H1 (cell line): ENCODE measurements at regions of chr22 and their contacts with region 1.

Region 1: GRCh38 chr22:36552289-36552688 is 23.3 kb upstream of the EIF3D start:
- DNase-seq: no peak
- H3K4me3 ChIP-seq: no peak overlapping the region
- H3K27ac ChIP-seq: no peak overlapping the region
- H3K4me1 ChIP-seq: peaks cover 0 to 9% (median 3%) of the 10 kb centered on the region in 4 experiments; a peak in 3 of 7 replicates
- H3K27me3 ChIP-seq: no peaks in the 10 kb centered on the region
- CTCF ChIP-seq: no peak
- EP300 ChIP-seq: no peak
- POLR2A ChIP-seq: no peak
- RAD21 ChIP-seq: no peak

Region 2: GRCh38 chr22:36492109-36492508 is 60.2 kb before region 1 on chr22:
- CTCF ChIA-PET with region 1: no interaction called
- POLR2A ChIA-PET with region 1: no interaction called
- DNase-seq: no peak
- H3K4me3 ChIP-seq: no peak overlapping the region
- H3K27ac ChIP-seq: no peak overlapping the region
- H3K4me1 ChIP-seq: no peaks in the 10 kb centered on the region
- H3K27me3 ChIP-seq: no peaks in the 10 kb centered on the region; a peak in 1 of 7 replicates
- CTCF ChIP-seq: no peak
- EP300 ChIP-seq: no peak
- POLR2A ChIP-seq: no peak
- RAD21 ChIP-seq: no peak

Region 3: GRCh38 chr22:36562261-36562835 is 10.1 kb after region 1 on chr22:
- CTCF ChIA-PET with region 1: interaction called, 11 read pairs
- POLR2A ChIA-PET with region 1: no interaction called
- DNase-seq: no peak
- H3K4me3 ChIP-seq: no peak overlapping the region
- H3K27ac ChIP-seq: no peak overlapping the region; the same call in 1 of the 2 replicates
- H3K4me1 ChIP-seq: peaks cover 8 to 24% (median 23%) of the 10 kb centered on the region in 4 experiments
- H3K27me3 ChIP-seq: no peaks in the 10 kb centered on the region
- CTCF ChIP-seq: no peak
- EP300 ChIP-seq: no peak
- POLR2A ChIP-seq: no peak
- RAD21 ChIP-seq: no peak